GM12878 (cell line): ENCODE measurements at regions of chr4 and their contacts with region 1.

Region 1: DNA sequence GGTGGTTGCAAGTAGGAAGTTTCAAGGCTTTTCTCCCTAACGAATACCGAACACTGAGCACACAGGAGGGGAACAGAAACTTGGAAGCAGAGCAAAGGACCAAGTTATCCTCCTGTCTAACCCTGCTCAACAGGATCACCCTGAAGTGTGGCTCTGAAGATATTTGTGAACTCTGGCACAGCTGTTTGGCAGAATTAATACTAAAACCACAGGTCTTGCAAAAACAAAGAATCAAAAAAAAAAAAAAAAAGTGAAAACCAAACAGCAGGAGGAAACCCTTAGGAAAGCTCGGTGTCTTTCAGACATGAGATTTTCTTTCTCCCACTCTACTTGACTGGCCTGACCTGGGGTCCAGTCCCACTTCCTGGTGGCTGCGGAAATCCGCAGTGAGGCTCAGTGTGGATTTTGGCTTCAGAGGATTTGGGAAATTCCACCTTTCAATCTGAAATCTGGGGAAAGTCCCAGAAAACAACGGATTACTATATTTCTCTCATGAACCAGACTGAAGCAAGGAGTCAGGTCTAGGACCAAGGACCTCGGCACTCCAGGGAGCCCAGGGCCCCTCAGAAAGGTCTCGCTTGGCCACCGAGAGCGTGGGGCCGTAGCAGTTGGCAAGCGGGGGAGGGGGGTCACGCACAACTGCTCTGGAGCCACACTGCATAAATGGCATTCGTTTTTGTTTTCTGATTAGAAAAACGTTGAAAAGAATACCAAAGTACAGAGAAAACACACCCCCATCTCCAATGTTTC is 867 bp downstream of the TIFA start:
- DNase-seq: no peak
- ATAC-seq: peak; percentile 23
- H3K4me3 ChIP-seq: peak overlapping the region; percentile 80
- H3K27ac ChIP-seq: peak overlapping the region; percentile 99
- H3K4me1 ChIP-seq: peaks cover 19% of the 10 kb centered on the region
- H3K27me3 ChIP-seq: no peaks in the 10 kb centered on the region
- CTCF ChIP-seq: no peak
- EP300 ChIP-seq: 0 out of 4 replicates have a peak, but pooled peaks of 1 of the 2 experiments have one; percentile 2
- POLR2A ChIP-seq: no peak
- RAD21 ChIP-seq: no peak

Region 2: GRCh38 chr4:111991797-111992196 is 293.0 kb before region 1 on chr4:
- CTCF ChIA-PET with region 1: no interaction called
- POLR2A ChIA-PET with region 1: no interaction called
- RAD21 ChIA-PET with region 1: no interaction called
- SMC1A ChIA-PET with region 1: no interaction called
- in situ Hi-C with region 1: no loop called
- intact Hi-C with region 1: no loop called
- DNase-seq: peak; percentile 13
- ATAC-seq: peak; percentile 69
- H3K4me3 ChIP-seq: no peak overlapping the region
- H3K27ac ChIP-seq: no peak overlapping the region
- H3K4me1 ChIP-seq: peaks cover 12% of the 10 kb centered on the region
- H3K27me3 ChIP-seq: peaks cover 0 to 2% of the 10 kb centered on the region in 2 experiments; a peak in 1 of 4 replicates
- CTCF ChIP-seq: no peak
- EP300 ChIP-seq: no peak
- POLR2A ChIP-seq: no peak
- RAD21 ChIP-seq: no peak

Region 3: GRCh38 chr4:112296949-112297880 is 12.4 kb after region 1 on chr4 and contains the start of gene ALPK1:
- CTCF ChIA-PET with region 1: interaction called, 8 read pairs
- POLR2A ChIA-PET with region 1: interaction called, 45 read pairs
- RAD21 ChIA-PET with region 1: interaction called, 73 read pairs
- SMC1A ChIA-PET with region 1: interaction called, 74 read pairs
- in situ Hi-C with region 1: no loop called
- intact Hi-C with region 1: no loop called
- DNase-seq: no peak
- ATAC-seq: peak; percentile 89
- H3K4me3 ChIP-seq: peak within 1 kb of the TSS; percentile 67
- H3K27ac ChIP-seq: peak within 1 kb of the TSS; percentile 62
- H3K4me1 ChIP-seq: peaks cover 7% of the 10 kb centered on the region
- H3K27me3 ChIP-seq: no peaks in the 10 kb centered on the region
- CTCF ChIP-seq: no peak
- EP300 ChIP-seq: no peak
- POLR2A ChIP-seq: no peak
- RAD21 ChIP-seq: no peak
- polyA plus RNA-seq, gene ALPK1: 8.5 to 9.7 TPM

Region 4: DNA sequence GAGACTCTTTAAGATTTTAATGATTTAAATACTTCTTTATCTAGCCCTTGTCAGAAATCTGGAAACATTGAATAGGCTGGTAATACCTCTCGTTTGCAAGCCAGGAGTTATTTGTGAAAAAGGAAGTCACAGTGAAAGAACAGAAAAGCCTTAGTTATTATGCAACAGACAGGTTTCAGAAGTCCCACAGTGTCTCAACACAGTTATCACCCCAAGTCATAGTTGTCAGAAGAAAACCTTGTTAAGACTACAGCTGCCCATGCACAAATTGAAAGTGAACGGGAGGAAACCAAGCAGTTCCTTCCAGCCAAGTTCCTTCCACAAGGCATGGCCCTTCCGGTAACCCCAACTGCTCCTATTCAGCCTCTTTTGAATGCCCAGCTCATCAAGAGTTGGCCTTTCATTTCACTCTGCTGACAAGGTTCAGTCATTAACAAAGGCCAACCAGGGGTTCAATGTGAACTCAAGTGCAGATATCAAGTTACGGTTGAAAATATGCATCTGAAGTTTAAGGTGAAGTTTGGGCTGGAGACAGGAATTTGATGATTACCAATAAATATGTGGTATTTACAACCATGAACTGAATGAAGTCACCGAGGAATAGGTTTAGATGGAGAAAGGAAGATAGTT is 27.9 kb after region 1 on chr4:
- CTCF ChIA-PET with region 1: interaction called, 27 read pairs
- POLR2A ChIA-PET with region 1: interaction called, 61 read pairs
- RAD21 ChIA-PET with region 1: interaction called, 151 read pairs
- SMC1A ChIA-PET with region 1: interaction called, 247 read pairs
- in situ Hi-C with region 1: no loop called
- intact Hi-C with region 1: no loop called
- DNase-seq: peak; percentile 88
- ATAC-seq: peak; percentile 97
- H3K4me3 ChIP-seq: peak overlapping the region; percentile 70
- H3K27ac ChIP-seq: peak overlapping the region; percentile 85
- H3K4me1 ChIP-seq: peaks cover 25% of the 10 kb centered on the region
- H3K27me3 ChIP-seq: no peaks in the 10 kb centered on the region
- CTCF ChIP-seq: no peak
- EP300 ChIP-seq: peak; percentile 8 to 40; a peak in 2 of 4 replicates
- POLR2A ChIP-seq: no peak
- RAD21 ChIP-seq: no peak

Region 5: GRCh38 chr4:112515304-112516067 is 230.6 kb after region 1 on chr4:
- CTCF ChIA-PET with region 1: interaction called, 22 read pairs
- POLR2A ChIA-PET with region 1: interaction called, 55 read pairs
- RAD21 ChIA-PET with region 1: interaction called, 38 read pairs
- SMC1A ChIA-PET with region 1: interaction called, 12 read pairs
- in situ Hi-C with region 1: no loop called
- intact Hi-C with region 1: loop called (anchors 5 kb)
- DNase-seq: no peak
- ATAC-seq: peak; percentile 65
- H3K4me3 ChIP-seq: peak overlapping the region; percentile 80
- H3K27ac ChIP-seq: peak overlapping the region; percentile 57
- H3K4me1 ChIP-seq: peaks cover 4% of the 10 kb centered on the region
- H3K27me3 ChIP-seq: peaks cover 5 to 14% of the 10 kb centered on the region in 2 experiments
- CTCF ChIP-seq: no peak
- EP300 ChIP-seq: no peak
- POLR2A ChIP-seq: peak; percentile 68
- RAD21 ChIP-seq: no peak

Region 6: GRCh38 chr4:112735474-112735951 is 450.7 kb after region 1 on chr4:
- CTCF ChIA-PET with region 1: no interaction called
- POLR2A ChIA-PET with region 1: no interaction called
- RAD21 ChIA-PET with region 1: no interaction called
- SMC1A ChIA-PET with region 1: no interaction called
- in situ Hi-C with region 1: no loop called
- intact Hi-C with region 1: loop called (anchors 5 kb)
- DNase-seq: peak; percentile 69
- ATAC-seq: peak; percentile 84
- H3K4me3 ChIP-seq: no peak overlapping the region
- H3K27ac ChIP-seq: peak overlapping the region; percentile 77; the same call in 1 of the 2 replicates
- H3K4me1 ChIP-seq: peaks cover 27% of the 10 kb centered on the region
- H3K27me3 ChIP-seq: no peaks in the 10 kb centered on the region
- CTCF ChIP-seq: no peak
- EP300 ChIP-seq: peak; percentile 82 to 92; a peak in 3 of 4 replicates
- POLR2A ChIP-seq: no peak
- RAD21 ChIP-seq: no peak